ENCODE measurements at regions of chr9 and their contacts with region 1.

Region 1: DNA sequence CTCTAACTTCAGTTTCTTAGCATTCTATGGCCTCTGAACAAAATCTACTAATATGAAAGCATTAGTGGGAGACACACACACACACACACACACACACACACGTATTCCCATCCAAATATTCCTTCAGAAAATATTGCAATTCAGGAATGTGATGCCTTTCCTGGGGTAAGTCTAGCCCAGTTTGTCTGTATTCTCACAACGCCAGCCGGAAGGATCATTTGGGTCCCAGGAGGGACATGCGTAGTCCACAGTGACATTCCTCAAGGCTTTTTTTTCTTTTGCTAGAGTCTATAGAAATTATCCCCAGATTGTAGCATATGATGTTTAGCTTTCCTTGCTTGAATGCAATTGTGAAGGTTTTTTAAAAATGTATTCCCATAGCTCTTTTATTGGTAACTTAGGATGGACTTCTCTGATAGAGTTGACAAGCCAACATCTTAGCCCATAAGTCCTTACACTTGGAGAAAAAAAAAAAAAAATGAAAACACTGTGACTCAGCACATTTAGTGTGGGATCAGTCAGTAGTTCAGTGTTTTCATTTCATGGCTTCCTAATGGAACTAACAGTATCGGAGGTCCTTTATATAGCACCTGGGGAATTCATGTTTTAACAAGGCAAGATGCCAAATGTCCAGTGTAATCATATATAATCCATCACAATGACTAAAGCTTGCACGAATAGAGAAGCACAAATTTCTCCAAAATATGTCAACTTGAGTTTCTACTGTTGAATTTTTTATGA is 316.5 kb downstream of the DIRAS2 start:
- DNase-seq: no peak
- H3K4me3 ChIP-seq: no peak overlapping the region
- H3K27ac ChIP-seq: no peak overlapping the region
- H3K4me1 ChIP-seq: no peaks in the 10 kb centered on the region
- H3K27me3 ChIP-seq: no peaks in the 10 kb centered on the region
- CTCF ChIP-seq: no peak
- POLR2A ChIP-seq: no peak

Region 2: DNA sequence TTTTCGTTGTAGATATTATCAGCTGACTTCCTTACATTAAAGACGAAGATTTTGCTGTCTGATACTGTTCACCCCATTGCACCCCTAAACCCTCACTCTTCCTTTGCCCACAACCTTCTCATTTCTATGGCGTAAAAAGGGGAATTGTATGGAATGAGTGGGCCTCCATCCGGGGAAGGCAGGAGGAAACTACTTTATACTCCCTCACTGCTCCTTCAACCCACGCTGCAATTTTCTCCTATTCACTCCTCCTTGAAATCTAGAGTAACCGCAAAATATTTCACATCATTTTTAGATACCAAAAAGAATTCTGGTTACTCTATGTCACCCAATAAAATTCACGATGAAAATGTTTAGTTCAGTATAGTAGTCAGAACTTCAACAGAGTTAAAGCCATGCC is 14.3 kb before region 1 on chr9:
- intact Hi-C with region 1: loop called (anchors 1 kb)
- DNase-seq: no peak
- H3K4me3 ChIP-seq: no peak overlapping the region
- H3K27ac ChIP-seq: no peak overlapping the region
- H3K4me1 ChIP-seq: no peaks in the 10 kb centered on the region
- H3K27me3 ChIP-seq: no peaks in the 10 kb centered on the region
- CTCF ChIP-seq: no peak
- POLR2A ChIP-seq: no peak

Region 3: DNA sequence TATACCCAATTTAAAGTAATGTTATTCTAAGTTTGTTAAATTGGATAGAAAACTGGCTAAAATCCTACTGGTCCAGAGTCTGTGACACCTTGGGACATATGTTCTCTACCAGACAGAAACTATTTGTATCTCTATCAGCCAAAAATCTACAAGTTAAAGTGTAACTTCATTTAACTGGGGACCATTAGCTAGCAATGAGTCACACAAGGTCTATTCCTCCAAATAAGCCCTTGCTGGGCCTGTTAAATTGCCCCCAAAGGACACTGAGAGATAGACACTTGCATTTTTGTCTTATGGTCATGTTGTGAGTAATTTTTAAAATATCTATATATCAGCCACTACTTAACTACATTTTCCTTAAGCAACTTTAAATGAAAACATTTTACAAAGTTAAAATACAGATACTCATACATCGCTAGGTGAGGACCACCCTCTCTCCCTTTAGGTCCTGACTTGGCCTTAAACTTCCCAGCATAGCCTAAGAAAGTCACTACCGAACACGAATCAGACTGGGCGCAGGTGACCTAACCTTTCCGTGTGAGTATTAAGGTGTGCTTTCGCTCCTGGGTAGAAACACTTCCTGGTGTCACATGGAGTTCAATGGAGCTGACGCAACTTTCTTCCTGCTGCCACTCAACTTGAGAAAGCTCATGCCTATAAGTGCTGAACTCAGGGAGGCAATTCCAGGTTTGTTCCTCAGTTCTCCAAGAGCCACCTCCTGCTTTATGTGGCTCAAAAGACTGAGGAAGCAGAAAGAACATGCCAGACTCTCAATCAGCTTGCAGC is 67.5 kb after region 1 on chr9:
- intact Hi-C with region 1: no loop called
- DNase-seq: no peak
- H3K4me3 ChIP-seq: no peak overlapping the region
- H3K27ac ChIP-seq: no peak overlapping the region
- H3K4me1 ChIP-seq: no peaks in the 10 kb centered on the region
- H3K27me3 ChIP-seq: no peaks in the 10 kb centered on the region
- CTCF ChIP-seq: no peak
- POLR2A ChIP-seq: no peak

Region 4: GRCh38 chr9:90616806-90617205 is 290.7 kb after region 1 on chr9:
- intact Hi-C with region 1: loop called (anchors 5 kb)
- DNase-seq: no peak
- H3K4me3 ChIP-seq: no peak overlapping the region
- H3K27ac ChIP-seq: no peak overlapping the region
- H3K4me1 ChIP-seq: no peaks in the 10 kb centered on the region
- H3K27me3 ChIP-seq: no peaks in the 10 kb centered on the region
- CTCF ChIP-seq: no peak
- POLR2A ChIP-seq: no peak